SK-N-SH (cell line): ENCODE measurements at regions of chr9 and their contacts with region 1.

Region 1: GRCh38 chr9:97386733-97387503 is 25.0 kb upstream of the TDRD7 start:
- DNase-seq: peak; percentile 89
- H3K4me3 ChIP-seq: peak overlapping the region; percentile 34 to 46; a peak in 3 of 4 replicates
- H3K27ac ChIP-seq: no peak overlapping the region
- H3K4me1 ChIP-seq: peaks cover 0 to 7% of the 10 kb centered on the region in 2 experiments; a peak in 1 of 4 replicates
- H3K27me3 ChIP-seq: no peaks in the 10 kb centered on the region
- CTCF ChIP-seq: peak; percentile 99
- EP300 ChIP-seq: no peak
- RAD21 ChIP-seq: peak; percentile 74

Region 2: GRCh38 chr9:97271292-97271691 is 115.6 kb before region 1 on chr9:
- CTCF ChIA-PET with region 1: no interaction called
- POLR2A ChIA-PET with region 1: no interaction called
- DNase-seq: no peak
- H3K4me3 ChIP-seq: no peak overlapping the region
- H3K27ac ChIP-seq: no peak overlapping the region
- H3K4me1 ChIP-seq: no peaks in the 10 kb centered on the region
- H3K27me3 ChIP-seq: no peaks in the 10 kb centered on the region
- CTCF ChIP-seq: no peak
- EP300 ChIP-seq: no peak
- RAD21 ChIP-seq: no peak

Region 3: GRCh38 chr9:97362266-97363160 is 24.4 kb before region 1 on chr9:
- CTCF ChIA-PET with region 1: interaction called, 20 read pairs
- POLR2A ChIA-PET with region 1: no interaction called
- DNase-seq: no peak
- H3K4me3 ChIP-seq: no peak overlapping the region
- H3K27ac ChIP-seq: no peak overlapping the region
- H3K4me1 ChIP-seq: no peaks in the 10 kb centered on the region
- H3K27me3 ChIP-seq: no peaks in the 10 kb centered on the region
- CTCF ChIP-seq: no peak
- EP300 ChIP-seq: no peak
- RAD21 ChIP-seq: no peak

Region 4: DNA sequence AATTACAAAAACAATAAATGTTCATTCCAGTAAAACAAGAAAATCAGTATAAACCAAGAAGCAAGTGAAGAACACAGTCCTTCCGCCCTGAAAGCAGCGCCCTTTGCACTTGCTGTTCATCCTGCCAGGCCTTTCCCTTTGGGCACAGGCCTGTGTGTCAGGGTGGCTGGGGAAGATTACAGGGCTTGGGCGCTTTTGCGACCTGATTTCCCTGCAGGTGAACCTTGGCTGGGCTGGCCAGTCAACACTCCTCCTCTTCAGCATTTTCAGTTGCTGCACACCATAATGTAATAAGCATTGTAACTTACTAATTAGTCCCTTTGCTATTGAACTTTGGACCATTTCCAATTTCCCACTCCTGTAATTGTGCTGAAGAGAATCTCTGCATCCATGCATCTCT is 13.6 kb before region 1 on chr9:
- CTCF ChIA-PET with region 1: interaction called, 47 read pairs
- POLR2A ChIA-PET with region 1: interaction called, 3 read pairs
- DNase-seq: no peak
- H3K4me3 ChIP-seq: no peak overlapping the region
- H3K27ac ChIP-seq: no peak overlapping the region
- H3K4me1 ChIP-seq: no peaks in the 10 kb centered on the region; a peak in 1 of 4 replicates
- H3K27me3 ChIP-seq: no peaks in the 10 kb centered on the region
- CTCF ChIP-seq: no peak
- EP300 ChIP-seq: no peak
- RAD21 ChIP-seq: no peak

Region 5: GRCh38 chr9:97398999-97399758 is 12.3 kb after region 1 on chr9:
- CTCF ChIA-PET with region 1: interaction called, 112 read pairs
- POLR2A ChIA-PET with region 1: no interaction called
- DNase-seq: peak; percentile 82
- H3K4me3 ChIP-seq: peak overlapping the region in 1 of 2 experiments; percentile 36; a peak in 1 of 4 replicates
- H3K27ac ChIP-seq: no peak overlapping the region
- H3K4me1 ChIP-seq: peaks cover 3 to 4% of the 10 kb centered on the region in 2 experiments; a peak in 1 of 4 replicates
- H3K27me3 ChIP-seq: no peaks in the 10 kb centered on the region
- CTCF ChIP-seq: peak; percentile 88
- EP300 ChIP-seq: no peak
- RAD21 ChIP-seq: peak; percentile 82

Region 6: DNA sequence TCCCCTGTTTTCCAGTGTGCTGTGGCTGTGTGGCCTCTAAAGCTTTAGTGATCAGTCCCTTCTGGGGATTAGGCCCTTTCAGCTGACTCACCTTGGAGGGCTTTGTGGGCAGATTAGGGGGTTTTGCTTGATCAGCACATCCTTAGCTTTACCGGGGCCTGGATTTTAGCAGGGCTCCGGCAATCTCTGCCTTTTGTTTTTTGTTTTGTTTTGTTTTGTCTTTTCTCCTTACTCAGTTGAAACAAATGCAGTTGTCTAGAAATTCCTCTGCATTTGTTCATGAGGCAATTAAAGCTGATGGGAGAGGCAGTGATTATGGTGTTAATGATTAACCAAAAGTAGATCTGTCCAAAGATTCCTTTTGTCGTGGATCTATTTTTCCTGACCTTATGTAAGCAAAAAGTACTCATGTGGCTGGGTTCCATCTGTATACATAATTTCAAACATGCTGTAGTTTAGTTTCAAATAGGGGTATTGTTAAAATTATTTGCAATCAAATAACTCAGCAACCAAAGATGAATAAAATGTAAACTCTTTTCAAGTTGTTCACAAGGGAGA is 19.8 kb after region 1 on chr9:
- CTCF ChIA-PET with region 1: interaction called, 112 read pairs
- POLR2A ChIA-PET with region 1: no interaction called
- DNase-seq: no peak
- H3K4me3 ChIP-seq: no peak overlapping the region
- H3K27ac ChIP-seq: no peak overlapping the region
- H3K4me1 ChIP-seq: peaks cover 0 to 3% of the 10 kb centered on the region in 2 experiments; a peak in 2 of 4 replicates
- H3K27me3 ChIP-seq: no peaks in the 10 kb centered on the region
- CTCF ChIP-seq: no peak
- EP300 ChIP-seq: no peak
- RAD21 ChIP-seq: no peak

Region 7: GRCh38 chr9:97411789-97412625 is 25.1 kb after region 1 on chr9 and contains the start of gene TDRD7:
- CTCF ChIA-PET with region 1: interaction called, 19 read pairs
- POLR2A ChIA-PET with region 1: no interaction called
- DNase-seq: peak; percentile 98
- H3K4me3 ChIP-seq: peak within 1 kb of the TSS; percentile 79 to 94
- H3K27ac ChIP-seq: peak within 1 kb of the TSS in 1 of 2 experiments; percentile 11; a peak in 2 of 4 replicates
- H3K4me1 ChIP-seq: peaks cover 8 to 13% of the 10 kb centered on the region in 2 experiments; a peak in 3 of 4 replicates
- H3K27me3 ChIP-seq: no peaks in the 10 kb centered on the region
- CTCF ChIP-seq: peak; percentile 93
- EP300 ChIP-seq: no peak; a peak in 1 of 4 replicates
- RAD21 ChIP-seq: peak; percentile 65
- polyA plus RNA-seq, gene TDRD7: 4.9 and 5.8 TPM in 2 replicates